ENCODE measurements at regions of chr4 and their contacts with region 1.

Region 1: GRCh38 chr4:184384056-184384809 is 90.1 kb downstream of the IRF2 start:
- DNase-seq: peak; percentile 43
- ATAC-seq: peak; percentile 52
- H3K4me3 ChIP-seq: peak overlapping the region; percentile 64
- H3K27ac ChIP-seq: peak overlapping the region; percentile 94
- H3K4me1 ChIP-seq: peaks cover 26% of the 10 kb centered on the region
- H3K27me3 ChIP-seq: no peaks in the 10 kb centered on the region
- CTCF ChIP-seq: no peak

Region 2: GRCh38 chr4:184237612-184238011 is 146.6 kb before region 1 on chr4:
- CTCF ChIA-PET with region 1: no interaction called
- POLR2A ChIA-PET with region 1: no interaction called
- intact Hi-C with region 1: no loop called
- DNase-seq: no peak
- ATAC-seq: no peak
- H3K4me3 ChIP-seq: no peak overlapping the region
- H3K27ac ChIP-seq: no peak overlapping the region
- H3K4me1 ChIP-seq: no peaks in the 10 kb centered on the region
- H3K27me3 ChIP-seq: peaks cover 10% of the 10 kb centered on the region; the same call in 1 of the 2 replicates
- CTCF ChIP-seq: no peak

Region 3: GRCh38 chr4:184343502-184344177 is 40.6 kb before region 1 on chr4:
- CTCF ChIA-PET with region 1: no interaction called
- POLR2A ChIA-PET with region 1: no interaction called
- intact Hi-C with region 1: loop called (anchors 5 kb)
- DNase-seq: peak; percentile 73
- ATAC-seq: peak; percentile 96
- H3K4me3 ChIP-seq: peak overlapping the region; percentile 76
- H3K27ac ChIP-seq: no peak overlapping the region
- H3K4me1 ChIP-seq: peaks cover 17% of the 10 kb centered on the region
- H3K27me3 ChIP-seq: no peaks in the 10 kb centered on the region
- CTCF ChIP-seq: no peak